Natural killer cell (primary cell): ENCODE measurements at regions of chr10 and their contacts with region 1.

Region 1: GRCh38 chr10:17228091-17228940 is at the start of gene VIM:
- DNase-seq: peak; percentile 82 to 91
- ATAC-seq: peak; percentile 48 to 60 (median 54)
- H3K4me3 ChIP-seq: peak within 1 kb of the TSS; percentile 93
- H3K4me3 Mint-ChIP-seq: peak within 1 kb of the TSS; percentile 98
- H3K27ac ChIP-seq: peak within 1 kb of the TSS; percentile 99
- H3K27ac Mint-ChIP-seq: peak within 1 kb of the TSS; percentile 96 to 99
- H3K4me1 ChIP-seq: peaks cover 15% of the 10 kb centered on the region
- H3K4me1 Mint-ChIP-seq: peaks cover 42 to 60% of the 10 kb centered on the region in 2 donors
- H3K27me3 ChIP-seq: no peaks in the 10 kb centered on the region
- H3K27me3 Mint-ChIP-seq: no peaks in the 10 kb centered on the region
- CTCF ChIP-seq: no peak
- total RNA-seq, gene VIM: 627 to 717 (median 634) TPM

Region 2: DNA sequence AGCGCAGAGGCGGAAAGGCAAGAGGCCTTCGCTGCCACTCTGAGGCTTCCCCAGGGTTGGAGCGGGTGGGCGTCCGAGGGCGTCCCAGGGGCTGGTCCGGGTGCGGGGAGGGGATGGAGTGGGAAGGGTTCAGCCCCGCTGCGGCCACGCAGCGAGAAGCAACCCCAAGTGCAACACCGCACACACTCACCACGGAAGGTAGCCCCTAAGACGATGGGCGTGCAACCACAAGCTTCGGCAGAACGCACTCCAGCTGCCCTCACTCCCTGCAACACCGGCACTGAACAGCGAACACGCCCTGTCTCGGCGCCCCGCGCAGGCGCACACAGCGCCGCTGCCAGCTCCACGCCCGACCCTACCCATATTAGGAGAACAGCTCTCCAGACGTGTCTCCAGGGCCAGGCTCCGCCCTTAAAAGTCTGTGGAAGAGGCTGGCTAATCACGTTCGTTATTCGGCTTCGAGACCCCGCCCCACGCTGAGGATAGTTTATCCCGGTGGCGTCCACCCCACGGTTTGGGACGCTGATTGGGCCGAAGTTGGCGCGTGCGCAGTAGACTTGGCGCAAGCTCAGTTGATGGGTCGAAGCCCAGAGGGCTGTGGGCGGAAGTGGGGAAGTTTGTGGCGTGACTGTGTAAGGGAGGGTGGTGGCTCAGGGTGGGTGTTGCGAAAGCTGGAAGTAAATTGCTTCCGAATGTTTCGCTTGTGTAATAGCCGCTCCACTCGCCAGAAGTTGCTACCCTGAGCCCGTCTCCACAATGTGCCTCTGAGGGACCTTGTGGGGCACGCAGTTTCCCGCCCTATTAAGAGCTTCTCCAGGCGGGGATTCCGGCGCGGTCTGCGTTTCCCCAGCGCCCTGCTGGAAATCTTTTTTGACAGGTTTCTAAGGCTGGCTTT is 410.9 kb before region 1 on chr10 and contains the start of gene RSU1:
- intact Hi-C with region 1: loop called (anchors 1 kb)
- DNase-seq: peak; percentile 100
- ATAC-seq: peak; percentile 96 to 99 (median 96)
- H3K4me3 ChIP-seq: peak within 1 kb of the TSS; percentile 82
- H3K4me3 Mint-ChIP-seq: peak within 1 kb of the TSS; percentile 96
- H3K27ac ChIP-seq: peak within 1 kb of the TSS; percentile 87
- H3K27ac Mint-ChIP-seq: peak within 1 kb of the TSS; percentile 91 to 96
- H3K4me1 ChIP-seq: peaks cover 17% of the 10 kb centered on the region
- H3K4me1 Mint-ChIP-seq: peaks cover 34 to 43% of the 10 kb centered on the region in 2 donors
- H3K27me3 ChIP-seq: no peaks in the 10 kb centered on the region
- H3K27me3 Mint-ChIP-seq: peaks cover 4 to 21% of the 10 kb centered on the region in 2 donors
- CTCF ChIP-seq: no peak
- total RNA-seq, gene RSU1: 75.0 to 85.3 (median 80.0) TPM

Region 3: GRCh38 chr10:17023386-17024298 is 204.7 kb before region 1 on chr10:
- intact Hi-C with region 1: loop called (anchors 1 kb)
- DNase-seq: peak; percentile 57 to 93
- ATAC-seq: peak; percentile 63 to 83 (median 79)
- H3K4me3 ChIP-seq: no peak overlapping the region
- H3K4me3 Mint-ChIP-seq: peak overlapping the region; percentile 76
- H3K27ac ChIP-seq: peak overlapping the region; percentile 98
- H3K27ac Mint-ChIP-seq: peak overlapping the region; percentile 97
- H3K4me1 ChIP-seq: peaks cover 40% of the 10 kb centered on the region
- H3K4me1 Mint-ChIP-seq: peaks cover 47 to 57% of the 10 kb centered on the region in 2 donors
- H3K27me3 ChIP-seq: no peaks in the 10 kb centered on the region
- H3K27me3 Mint-ChIP-seq: no peaks in the 10 kb centered on the region
- CTCF ChIP-seq: no peak

Region 4: GRCh38 chr10:17200912-17201793 is 27.2 kb before region 1 on chr10 and contains the start of gene TRDMT1:
- intact Hi-C with region 1: loop called (anchors 1 kb)
- DNase-seq: peak; percentile 79 to 86
- ATAC-seq: peak; percentile 88 to 96 (median 90)
- H3K4me3 ChIP-seq: peak within 1 kb of the TSS; percentile 87
- H3K4me3 Mint-ChIP-seq: peak within 1 kb of the TSS; percentile 94
- H3K27ac ChIP-seq: peak within 1 kb of the TSS; percentile 87
- H3K27ac Mint-ChIP-seq: peak within 1 kb of the TSS; percentile 91 to 97
- H3K4me1 ChIP-seq: peaks cover 18% of the 10 kb centered on the region
- H3K4me1 Mint-ChIP-seq: peaks cover 28 to 33% of the 10 kb centered on the region in 2 donors
- H3K27me3 ChIP-seq: no peaks in the 10 kb centered on the region
- H3K27me3 Mint-ChIP-seq: no peaks in the 10 kb centered on the region
- CTCF ChIP-seq: no peak
- total RNA-seq, gene TRDMT1: 11.0 to 21.8 (median 14.4) TPM

Region 5: DNA sequence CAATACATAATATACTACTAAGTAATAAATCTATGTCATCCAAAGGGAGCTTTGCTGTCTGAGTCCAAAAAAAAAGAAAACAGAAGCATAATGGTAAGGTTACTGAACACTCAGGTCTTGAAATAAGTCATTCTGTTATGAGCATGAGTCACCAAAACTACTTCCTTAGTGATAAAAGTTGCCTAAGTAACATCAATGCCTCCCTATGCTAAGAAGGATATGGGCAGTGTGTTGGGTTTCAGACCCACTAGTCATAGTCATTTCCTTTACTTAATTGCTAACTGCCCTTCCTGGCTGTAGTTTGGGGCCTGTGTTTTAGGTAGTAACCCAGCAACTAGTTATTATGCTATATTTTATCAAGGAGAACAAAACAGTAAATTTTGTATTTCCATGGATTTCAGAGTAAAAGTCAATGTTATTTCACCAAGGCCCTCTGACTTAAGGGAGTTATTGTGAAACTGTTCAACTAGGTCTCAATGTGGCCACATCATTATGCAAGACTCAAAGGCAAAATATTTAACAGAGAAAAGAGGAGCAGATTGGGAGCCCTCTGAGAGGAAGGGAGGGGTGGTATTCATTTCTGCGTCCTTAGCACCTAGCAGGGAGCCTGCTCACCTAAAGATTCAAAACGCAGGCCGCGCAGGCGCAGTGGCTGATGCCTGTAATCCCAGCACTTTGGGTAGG is 12.0 kb before region 1 on chr10:
- intact Hi-C with region 1: loop called (anchors 1 kb)
- DNase-seq: peak in 1 of 2 donors; percentile 65
- ATAC-seq: peak; percentile 92 to 98 (median 96)
- H3K4me3 ChIP-seq: no peak overlapping the region
- H3K4me3 Mint-ChIP-seq: peak overlapping the region; percentile 40
- H3K27ac ChIP-seq: peak overlapping the region; percentile 73
- H3K27ac Mint-ChIP-seq: peak overlapping the region; percentile 91 to 97
- H3K4me1 ChIP-seq: peaks cover 13% of the 10 kb centered on the region
- H3K4me1 Mint-ChIP-seq: peaks cover 13 to 19% of the 10 kb centered on the region in 2 donors
- H3K27me3 ChIP-seq: no peaks in the 10 kb centered on the region
- H3K27me3 Mint-ChIP-seq: no peaks in the 10 kb centered on the region
- CTCF ChIP-seq: no peak